T-cell (primary cell): ENCODE measurements at regions of chr3 and their contacts with region 1.

Region 1: GRCh38 chr3:138336454-138336999 is 6.9 kb upstream of the NME9 start:
- DNase-seq: no peak
- ATAC-seq: no peak
- H3K4me3 ChIP-seq: no peak overlapping the region
- H3K4me3 Mint-ChIP-seq: no peak overlapping the region
- H3K27ac ChIP-seq: no peak overlapping the region
- H3K27ac Mint-ChIP-seq: no peak overlapping the region
- H3K4me1 ChIP-seq: no peaks in the 10 kb centered on the region
- H3K4me1 Mint-ChIP-seq: peaks cover 0 to 5% (median 3%) of the 10 kb centered on the region in 3 donors
- H3K27me3 ChIP-seq: peaks cover 0 to 3% of the 10 kb centered on the region in 2 experiments
- H3K27me3 Mint-ChIP-seq: peaks cover 2 to 3% of the 10 kb centered on the region in 2 donors

Region 2: DNA sequence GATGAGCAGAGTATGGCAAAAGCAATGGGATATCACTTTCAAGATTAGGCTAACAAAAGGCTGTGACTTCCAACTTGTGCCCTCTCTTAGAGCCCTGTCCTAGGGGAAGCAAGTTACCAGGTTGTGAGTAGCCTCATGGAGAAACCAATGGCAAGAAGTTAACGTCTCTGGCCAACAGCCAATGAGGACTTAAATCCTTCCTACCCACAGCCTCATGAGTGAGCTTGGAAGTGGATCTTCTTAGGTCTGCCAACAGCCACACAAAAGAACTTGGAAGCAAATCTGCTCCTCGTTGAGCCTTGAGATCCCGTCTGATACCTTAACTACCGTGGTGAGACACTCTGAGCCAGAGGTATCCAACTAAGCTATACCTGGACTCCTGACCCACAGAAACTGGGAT is 12.6 kb before region 1 on chr3:
- CTCF ChIA-PET with region 1: interaction called in 1 of 2 experiments, 9 read pairs
- POLR2A ChIA-PET with region 1: interaction called, 3 to 13 read pairs
- DNase-seq: no peak
- ATAC-seq: no peak
- H3K4me3 ChIP-seq: no peak overlapping the region
- H3K4me3 Mint-ChIP-seq: no peak overlapping the region
- H3K27ac ChIP-seq: no peak overlapping the region
- H3K27ac Mint-ChIP-seq: no peak overlapping the region
- H3K4me1 ChIP-seq: peaks cover 14 to 22% of the 10 kb centered on the region in 2 experiments
- H3K4me1 Mint-ChIP-seq: peaks cover 42 to 47% (median 42%) of the 10 kb centered on the region in 3 donors
- H3K27me3 ChIP-seq: no peaks in the 10 kb centered on the region
- H3K27me3 Mint-ChIP-seq: no peaks in the 10 kb centered on the region

Region 3: DNA sequence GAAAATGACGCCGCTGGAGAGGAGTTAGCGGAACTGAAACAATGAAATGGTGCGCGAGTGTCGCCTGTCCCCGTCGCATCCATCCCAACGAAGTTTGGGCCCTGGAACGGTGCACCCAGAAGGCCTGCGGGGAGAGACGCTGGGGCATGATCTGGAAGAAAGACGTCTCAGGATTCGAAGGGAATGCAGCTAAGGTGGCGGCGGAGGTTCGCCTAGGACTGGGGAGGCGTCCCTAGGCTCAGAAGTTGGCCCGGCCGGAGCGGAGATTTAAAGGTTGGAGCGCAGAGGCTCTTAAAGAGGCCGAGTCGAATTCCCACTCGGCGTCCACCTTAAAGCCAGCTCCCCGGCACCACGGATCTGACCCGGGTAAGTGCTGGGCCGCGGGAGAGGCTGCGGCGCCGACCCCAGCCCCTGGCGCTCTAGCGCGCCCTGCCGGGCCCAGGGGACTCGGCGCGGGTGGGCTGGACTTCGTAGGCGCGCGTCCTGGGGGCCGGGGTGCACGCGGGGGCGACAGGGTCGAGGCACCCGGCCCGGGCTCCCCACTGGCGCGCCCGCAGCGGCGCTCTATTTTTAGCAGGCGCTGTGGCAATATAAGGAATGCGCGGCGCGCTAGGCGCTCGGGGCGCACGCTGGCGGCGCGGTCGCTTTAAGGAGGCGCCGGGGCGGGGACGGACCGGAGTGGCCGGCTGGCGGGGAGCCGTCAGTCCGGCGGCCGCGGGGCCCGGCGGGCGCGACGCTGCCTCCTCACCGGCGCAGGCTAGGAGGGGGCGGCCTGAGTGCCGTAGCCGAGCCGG is 11.6 kb after region 1 on chr3 and contains the start of gene MRAS:
- CTCF ChIA-PET with region 1: interaction called, 9 to 11 read pairs
- POLR2A ChIA-PET with region 1: no interaction called
- DNase-seq: peak in 12 of 35 experiments; percentile 1 to 41 (median 15)
- ATAC-seq: peak; percentile 59 to 82 (median 67)
- H3K4me3 ChIP-seq: peak within 1 kb of the TSS; percentile 47 to 70
- H3K4me3 Mint-ChIP-seq: peak within 1 kb of the TSS; percentile 82 to 90 (median 88)
- H3K27ac ChIP-seq: no peak within 1 kb of the TSS
- H3K27ac Mint-ChIP-seq: peak within 1 kb of the TSS in 1 of 2 donors; percentile 27
- H3K4me1 ChIP-seq: peaks cover 0 to 8% of the 10 kb centered on the region in 2 experiments
- H3K4me1 Mint-ChIP-seq: peaks cover 10 to 13% (median 11%) of the 10 kb centered on the region in 3 donors
- H3K27me3 ChIP-seq: peaks cover 0 to 49% of the 10 kb centered on the region in 2 experiments
- H3K27me3 Mint-ChIP-seq: peaks cover 17 to 46% of the 10 kb centered on the region in 2 donors
- total RNA-seq, gene MRAS: 0.28 to 0.49 (median 0.42) TPM in 4 of 5 donors, not detected in the other

Region 4: GRCh38 chr3:138668107-138668506 is 331.6 kb after region 1 on chr3:
- CTCF ChIA-PET with region 1: no interaction called
- POLR2A ChIA-PET with region 1: no interaction called
- DNase-seq: no peak
- ATAC-seq: no peak
- H3K4me3 ChIP-seq: no peak overlapping the region
- H3K4me3 Mint-ChIP-seq: no peak overlapping the region
- H3K27ac ChIP-seq: no peak overlapping the region
- H3K27ac Mint-ChIP-seq: no peak overlapping the region
- H3K4me1 ChIP-seq: no peaks in the 10 kb centered on the region
- H3K4me1 Mint-ChIP-seq: peaks cover 0 to 6% (median 0%) of the 10 kb centered on the region in 3 donors
- H3K27me3 ChIP-seq: no peaks in the 10 kb centered on the region
- H3K27me3 Mint-ChIP-seq: no peaks in the 10 kb centered on the region